SK-N-SH (cell line): ENCODE measurements at regions of chr21 and their contacts with region 1.

Region 1: DNA sequence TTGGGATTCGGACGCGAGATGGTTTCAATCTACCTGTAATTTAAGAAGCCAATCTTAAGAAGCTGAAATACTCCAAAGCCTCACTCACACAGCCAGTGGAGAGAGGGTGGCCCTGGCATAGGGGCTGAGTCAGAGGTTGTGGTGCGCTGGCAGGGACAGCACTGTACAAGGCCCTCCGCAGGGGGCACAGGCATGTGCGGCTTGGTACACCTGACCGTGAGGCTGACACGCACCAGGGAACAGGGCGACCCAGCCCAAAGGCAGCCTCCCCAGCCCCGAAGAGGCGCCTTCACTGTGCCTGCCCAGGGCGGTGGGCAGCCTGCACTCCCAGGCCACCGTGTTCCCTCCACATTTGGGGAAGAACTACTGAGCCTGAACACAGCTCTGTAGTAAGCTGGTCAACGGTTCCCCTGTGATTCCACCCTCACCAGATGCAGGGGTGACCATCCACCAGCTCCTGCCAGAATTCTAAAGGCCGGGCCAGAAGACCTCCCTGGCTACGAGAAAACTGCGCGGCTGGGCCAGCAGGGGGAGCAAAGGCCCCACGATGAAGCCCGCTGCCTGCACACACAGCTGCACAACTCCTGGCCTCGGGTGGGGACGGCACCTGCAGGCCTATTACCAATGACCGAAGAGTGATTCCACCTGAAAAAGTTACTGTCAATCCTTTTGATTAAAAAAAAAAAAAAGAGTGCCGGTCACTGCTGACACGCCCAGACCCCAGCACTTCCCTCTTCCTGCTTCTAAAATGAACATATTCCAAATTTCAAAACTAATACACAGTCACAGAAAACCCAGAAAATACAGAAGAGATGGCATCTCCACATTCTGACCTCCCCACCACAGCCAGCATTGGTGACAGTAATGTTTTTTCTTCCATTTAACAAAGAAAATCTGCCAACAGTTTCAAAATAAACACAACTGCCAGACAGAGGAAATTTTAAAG is 49.6 kb upstream of the RIPK4 start:
- DNase-seq: peak; percentile 88
- H3K4me3 ChIP-seq: peak overlapping the region in 1 of 2 experiments; percentile 35; a peak in 1 of 4 replicates
- H3K27ac ChIP-seq: peak overlapping the region in 1 of 2 experiments; percentile 37; a peak in 1 of 4 replicates
- H3K4me1 ChIP-seq: peaks cover 0 to 1% of the 10 kb centered on the region in 2 experiments; a peak in 2 of 4 replicates
- H3K27me3 ChIP-seq: no peaks in the 10 kb centered on the region
- CTCF ChIP-seq: peak; percentile 76
- EP300 ChIP-seq: no peak
- RAD21 ChIP-seq: peak; percentile 78

Region 2: GRCh38 chr21:41559658-41560631 is 256.5 kb before region 1 on chr21:
- CTCF ChIA-PET with region 1: no interaction called
- POLR2A ChIA-PET with region 1: no interaction called
- DNase-seq: no peak
- H3K4me3 ChIP-seq: no peak overlapping the region
- H3K27ac ChIP-seq: no peak overlapping the region
- H3K4me1 ChIP-seq: no peaks in the 10 kb centered on the region
- H3K27me3 ChIP-seq: peaks cover 7% of the 10 kb centered on the region; the same call in 1 of the 2 replicates
- CTCF ChIP-seq: no peak
- EP300 ChIP-seq: no peak
- RAD21 ChIP-seq: no peak

Region 3: DNA sequence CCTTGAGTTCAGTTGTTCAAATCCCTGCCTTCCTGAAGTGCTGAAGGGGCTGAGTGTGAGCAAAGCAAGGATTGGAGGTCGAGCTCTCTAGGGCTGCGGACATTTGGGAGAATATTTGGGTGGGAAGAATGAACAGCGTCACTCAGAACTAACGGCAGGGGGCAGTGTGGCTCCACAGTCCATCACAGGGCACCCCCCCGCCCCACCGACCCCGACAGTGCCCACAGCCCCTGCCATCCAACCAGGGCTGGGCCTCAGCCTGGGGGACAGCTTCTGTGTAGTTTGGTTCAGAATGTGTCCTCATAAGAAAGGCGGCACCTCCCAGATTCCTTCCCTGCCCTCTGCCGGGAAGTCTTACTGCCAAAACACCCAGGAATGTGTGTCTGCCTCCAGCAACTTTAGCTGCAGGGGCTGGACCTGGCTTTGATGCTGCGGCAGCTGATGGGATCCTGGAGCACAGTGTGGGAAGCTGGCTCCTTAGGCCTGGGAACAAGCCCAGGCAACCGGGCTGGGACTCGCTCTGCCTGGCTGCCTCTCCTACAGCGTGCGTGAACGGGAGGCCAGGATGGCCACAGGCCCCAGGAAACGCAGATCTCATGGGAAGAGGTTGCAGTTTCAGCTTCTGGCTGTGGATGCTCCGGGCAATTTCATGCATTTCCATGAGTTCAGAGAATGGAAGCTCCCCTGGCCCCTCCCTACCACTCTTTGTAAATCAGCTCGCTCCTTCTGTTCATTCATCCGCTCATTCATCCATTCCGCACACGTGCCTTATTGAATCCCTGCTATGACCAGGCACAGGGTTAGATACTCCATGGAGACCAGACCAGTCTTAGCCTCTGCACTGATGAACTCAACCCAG is 203.6 kb before region 1 on chr21:
- CTCF ChIA-PET with region 1: interaction called, 14 read pairs
- POLR2A ChIA-PET with region 1: no interaction called
- DNase-seq: peak; percentile 79
- H3K4me3 ChIP-seq: peak overlapping the region in 1 of 2 experiments; percentile 8; a peak in 1 of 4 replicates
- H3K27ac ChIP-seq: peak overlapping the region; percentile 60 to 100
- H3K4me1 ChIP-seq: peaks cover 10 to 23% of the 10 kb centered on the region in 2 experiments; a peak in 3 of 4 replicates
- H3K27me3 ChIP-seq: no peaks in the 10 kb centered on the region
- CTCF ChIP-seq: peak; percentile 85
- EP300 ChIP-seq: peak in 1 of 2 experiments; percentile 49; a peak in 1 of 4 replicates
- RAD21 ChIP-seq: peak; percentile 74

Region 4: GRCh38 chr21:41802684-41803083 is 13.8 kb before region 1 on chr21:
- CTCF ChIA-PET with region 1: interaction called, 16 read pairs
- POLR2A ChIA-PET with region 1: no interaction called
- DNase-seq: no peak
- H3K4me3 ChIP-seq: no peak overlapping the region
- H3K27ac ChIP-seq: no peak overlapping the region
- H3K4me1 ChIP-seq: no peaks in the 10 kb centered on the region
- H3K27me3 ChIP-seq: no peaks in the 10 kb centered on the region
- CTCF ChIP-seq: no peak
- EP300 ChIP-seq: no peak
- RAD21 ChIP-seq: no peak

Region 5: DNA sequence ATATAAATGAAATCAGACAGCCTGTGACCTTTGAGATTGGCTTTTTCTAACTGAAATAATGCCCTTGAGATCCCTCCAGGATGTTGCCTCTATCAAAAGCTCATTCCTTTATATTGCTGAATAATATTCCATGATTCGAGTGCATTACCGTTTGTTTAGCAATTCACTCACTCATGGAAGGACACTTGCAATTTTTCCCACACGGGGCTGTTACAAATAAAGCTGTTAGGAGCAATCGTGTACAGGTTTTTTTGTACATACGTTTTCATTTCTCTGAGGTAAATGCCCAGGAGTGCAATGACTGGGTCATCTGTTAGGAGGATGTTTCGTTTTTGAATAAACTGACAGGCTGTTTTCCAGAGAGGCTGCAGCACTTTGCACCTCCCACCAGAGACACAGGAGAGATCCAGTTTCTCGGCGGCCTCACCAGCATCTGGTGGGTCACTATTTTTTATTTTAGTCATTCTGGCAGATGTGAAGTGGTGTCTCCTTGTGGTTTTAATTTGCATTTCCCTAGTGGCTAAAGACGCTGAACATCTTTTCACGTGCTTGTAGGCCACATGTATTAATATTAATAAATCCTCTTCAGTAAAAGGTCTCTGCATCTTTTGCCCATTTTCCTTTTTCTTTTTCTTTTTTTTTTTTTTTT is 51.7 kb after region 1 on chr21:
- CTCF ChIA-PET with region 1: interaction called, 11 read pairs
- POLR2A ChIA-PET with region 1: no interaction called
- DNase-seq: no peak
- H3K4me3 ChIP-seq: no peak overlapping the region
- H3K27ac ChIP-seq: no peak overlapping the region
- H3K4me1 ChIP-seq: peaks cover 3 to 16% of the 10 kb centered on the region in 2 experiments; a peak in 1 of 4 replicates
- H3K27me3 ChIP-seq: no peaks in the 10 kb centered on the region
- CTCF ChIP-seq: no peak
- EP300 ChIP-seq: no peak
- RAD21 ChIP-seq: no peak

Region 6: GRCh38 chr21:42107881-42108553 is 291.5 kb after region 1 on chr21:
- CTCF ChIA-PET with region 1: interaction called, 55 read pairs
- POLR2A ChIA-PET with region 1: no interaction called
- DNase-seq: peak; percentile 88
- H3K4me3 ChIP-seq: peak overlapping the region in 1 of 2 experiments; percentile 16; a peak in 1 of 4 replicates
- H3K27ac ChIP-seq: no peak overlapping the region
- H3K4me1 ChIP-seq: peaks cover 0 to 5% of the 10 kb centered on the region in 2 experiments; a peak in 1 of 4 replicates
- H3K27me3 ChIP-seq: no peaks in the 10 kb centered on the region
- CTCF ChIP-seq: peak; percentile 71
- EP300 ChIP-seq: no peak
- RAD21 ChIP-seq: peak; percentile 61